ENCODE measurements at regions of chr10 and their contacts with region 1.

Region 1: DNA sequence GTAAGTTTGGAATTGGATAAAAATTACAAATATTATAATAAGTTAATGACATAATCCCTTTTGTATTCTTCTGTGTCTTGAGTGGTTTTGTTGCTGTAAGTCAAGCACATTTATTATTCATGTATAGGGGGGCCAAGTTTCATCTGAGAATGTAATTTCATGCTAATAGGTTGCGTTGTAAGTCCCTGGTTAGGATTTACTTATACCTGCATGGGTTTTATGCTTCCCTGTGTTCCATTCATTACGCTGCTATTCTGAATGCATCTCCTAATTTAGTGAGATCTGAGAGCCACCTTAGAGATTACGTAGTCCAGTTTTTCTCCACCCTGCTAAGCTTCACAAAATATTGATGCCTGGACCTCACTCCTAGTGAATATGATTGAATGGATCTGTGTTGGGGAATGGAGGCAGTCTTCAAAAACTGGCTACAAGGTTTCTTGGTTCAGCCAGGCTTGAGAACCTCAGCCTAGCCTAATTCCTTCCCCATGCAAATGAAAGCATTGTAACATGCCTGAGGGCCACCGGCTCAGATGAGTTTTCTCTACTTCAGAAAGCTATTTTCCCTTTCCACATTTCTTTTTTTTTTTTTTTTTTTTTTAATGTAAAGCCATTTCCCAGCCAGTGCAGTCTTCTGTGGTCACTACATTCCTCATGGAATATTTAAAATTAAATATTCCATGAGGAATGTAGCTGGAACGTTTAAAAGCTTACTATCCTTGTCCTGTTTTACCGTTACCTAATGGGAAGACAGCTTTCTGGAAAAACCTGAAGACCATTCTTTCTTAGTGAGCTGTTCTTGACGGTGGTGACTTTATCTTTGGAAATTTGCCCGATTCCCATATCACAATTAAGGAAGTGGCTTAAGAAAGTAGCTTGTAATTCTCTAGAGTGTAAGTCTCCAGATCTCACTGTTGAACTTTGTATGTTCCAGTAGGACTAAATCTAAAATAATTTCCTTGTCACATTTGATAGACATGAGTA is 16.0 kb downstream of the PAPSS2 start:
- DNase-seq: peak; percentile 82
- ATAC-seq: peak; percentile 62
- H3K4me3 ChIP-seq: no peak overlapping the region
- H3K27ac ChIP-seq: peak overlapping the region; percentile 43
- H3K4me1 ChIP-seq: peaks cover 18% of the 10 kb centered on the region
- H3K27me3 ChIP-seq: no peaks in the 10 kb centered on the region
- CTCF ChIP-seq: no peak

Region 2: GRCh38 chr10:87646939-87647338 is 28.7 kb before region 1 on chr10:
- CTCF ChIA-PET with region 1: no interaction called
- POLR2A ChIA-PET with region 1: no interaction called
- intact Hi-C with region 1: no loop called
- DNase-seq: no peak
- ATAC-seq: no peak
- H3K4me3 ChIP-seq: no peak overlapping the region
- H3K27ac ChIP-seq: no peak overlapping the region
- H3K4me1 ChIP-seq: no peaks in the 10 kb centered on the region
- H3K27me3 ChIP-seq: no peaks in the 10 kb centered on the region
- CTCF ChIP-seq: no peak

Region 3: GRCh38 chr10:87715552-87716347 is 40.1 kb after region 1 on chr10:
- CTCF ChIA-PET with region 1: interaction called, 4 read pairs
- POLR2A ChIA-PET with region 1: no interaction called
- intact Hi-C with region 1: loop called (anchors 5 kb)
- DNase-seq: no peak
- ATAC-seq: no peak
- H3K4me3 ChIP-seq: no peak overlapping the region
- H3K27ac ChIP-seq: no peak overlapping the region
- H3K4me1 ChIP-seq: no peaks in the 10 kb centered on the region
- H3K27me3 ChIP-seq: no peaks in the 10 kb centered on the region
- CTCF ChIP-seq: no peak

Measured in PC-3 (cell line).